ENCODE measurements at regions of chr21 and their contacts with region 1.

Region 1: GRCh38 chr21:30194701-30195299 is 21.1 kb downstream of the CLDN8 start:
- H3K4me3 ChIP-seq: no peak overlapping the region
- H3K27ac ChIP-seq: no peak overlapping the region
- H3K4me1 ChIP-seq: no peaks in the 10 kb centered on the region
- CTCF ChIP-seq: no peak

Region 2: DNA sequence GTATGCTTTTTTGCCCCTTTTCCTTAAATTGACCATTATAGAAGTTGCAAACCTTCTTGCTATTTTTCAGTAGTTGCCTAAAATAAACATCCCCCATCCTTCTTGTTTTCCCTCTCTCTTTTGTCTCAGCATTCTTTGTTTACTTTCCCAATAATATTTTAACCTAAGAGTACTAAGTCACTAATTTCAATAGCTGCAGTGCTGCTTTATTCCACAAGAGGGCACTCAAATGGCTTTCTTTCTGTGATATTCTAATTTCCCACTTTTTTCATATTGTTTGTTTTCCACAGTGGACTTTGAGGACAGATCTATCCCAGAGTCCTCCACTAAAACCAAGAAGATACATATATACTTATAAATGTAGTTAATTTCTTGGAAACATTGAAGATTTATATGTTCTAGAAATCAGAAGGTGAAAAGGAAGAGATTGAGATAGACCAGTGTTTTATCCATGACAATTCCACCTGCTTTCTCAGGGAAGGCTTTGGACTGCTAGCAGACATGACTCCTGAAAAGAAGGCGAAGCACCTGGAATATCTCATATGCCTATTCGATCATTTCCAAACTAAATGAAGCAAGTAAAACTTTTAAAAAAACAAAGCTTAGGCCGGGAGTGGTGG is 150.2 kb before region 1 on chr21:
- CTCF ChIA-PET with region 1: interaction called, 100 read pairs
- POLR2A ChIA-PET with region 1: no interaction called
- H3K4me3 ChIP-seq: no peak overlapping the region
- H3K27ac ChIP-seq: no peak overlapping the region
- H3K4me1 ChIP-seq: no peaks in the 10 kb centered on the region
- CTCF ChIP-seq: no peak

Region 3: DNA sequence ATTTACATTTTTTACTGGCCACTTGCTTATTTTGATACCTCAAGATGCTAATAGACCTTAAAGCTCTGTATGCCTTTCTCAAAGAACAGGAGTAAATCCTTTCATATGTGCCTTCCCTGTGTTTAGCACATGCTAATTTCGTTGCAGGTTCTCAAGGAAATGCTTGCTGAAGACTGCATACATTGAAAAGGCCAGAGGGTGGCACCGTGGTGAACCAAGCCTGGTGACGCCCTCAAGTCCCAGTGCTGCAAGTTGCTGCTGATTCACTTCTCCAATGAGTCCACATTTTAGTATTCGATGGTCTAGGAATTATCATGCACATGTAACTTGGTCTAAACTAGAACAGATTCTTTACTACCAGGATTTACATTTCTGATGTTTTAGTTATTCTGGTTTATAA is 122.3 kb before region 1 on chr21:
- CTCF ChIA-PET with region 1: interaction called, 23 read pairs
- POLR2A ChIA-PET with region 1: no interaction called
- H3K4me3 ChIP-seq: no peak overlapping the region
- H3K27ac ChIP-seq: no peak overlapping the region
- H3K4me1 ChIP-seq: no peaks in the 10 kb centered on the region
- CTCF ChIP-seq: no peak

Region 4: GRCh38 chr21:30083225-30083945 is 111.4 kb before region 1 on chr21:
- CTCF ChIA-PET with region 1: interaction called, 10 read pairs
- POLR2A ChIA-PET with region 1: no interaction called
- H3K4me3 ChIP-seq: no peak overlapping the region
- H3K27ac ChIP-seq: no peak overlapping the region
- H3K4me1 ChIP-seq: no peaks in the 10 kb centered on the region
- CTCF ChIP-seq: no peak

Region 5: GRCh38 chr21:30216041-30216723 is 21.4 kb after region 1 on chr21 and contains the start of gene CLDN8:
- CTCF ChIA-PET with region 1: interaction called, 10 read pairs
- POLR2A ChIA-PET with region 1: no interaction called
- H3K4me3 ChIP-seq: no peak within 1 kb of the TSS
- H3K27ac ChIP-seq: no peak within 1 kb of the TSS
- H3K4me1 ChIP-seq: no peaks in the 10 kb centered on the region
- CTCF ChIP-seq: no peak

Region 6: GRCh38 chr21:30223636-30224035 is 28.8 kb after region 1 on chr21:
- CTCF ChIA-PET with region 1: interaction called, 12 read pairs
- POLR2A ChIA-PET with region 1: no interaction called
- H3K4me3 ChIP-seq: no peak overlapping the region
- H3K27ac ChIP-seq: no peak overlapping the region
- H3K4me1 ChIP-seq: no peaks in the 10 kb centered on the region
- CTCF ChIP-seq: no peak

Measured in HEK293 (cell line).